Adrenal gland (tissue), 19 donors: ENCODE measurements at regions of chr22 and their contacts with region 1.

Region 1: GRCh38 chr22:34414484-34415440 is 494.5 kb upstream of the LARGE1 start:
- DNase-seq: peak in 6 of 7 donors; percentile 27 to 51 (median 32)
- H3K4me3 ChIP-seq: no peak overlapping the region
- H3K27ac ChIP-seq: no peak overlapping the region
- H3K4me1 ChIP-seq: no peaks in the 10 kb centered on the region
- H3K27me3 ChIP-seq: no peaks in the 10 kb centered on the region
- CTCF ChIP-seq: peak; percentile 20 to 56 (median 36)
- POLR2A ChIP-seq: no peak

Region 2: DNA sequence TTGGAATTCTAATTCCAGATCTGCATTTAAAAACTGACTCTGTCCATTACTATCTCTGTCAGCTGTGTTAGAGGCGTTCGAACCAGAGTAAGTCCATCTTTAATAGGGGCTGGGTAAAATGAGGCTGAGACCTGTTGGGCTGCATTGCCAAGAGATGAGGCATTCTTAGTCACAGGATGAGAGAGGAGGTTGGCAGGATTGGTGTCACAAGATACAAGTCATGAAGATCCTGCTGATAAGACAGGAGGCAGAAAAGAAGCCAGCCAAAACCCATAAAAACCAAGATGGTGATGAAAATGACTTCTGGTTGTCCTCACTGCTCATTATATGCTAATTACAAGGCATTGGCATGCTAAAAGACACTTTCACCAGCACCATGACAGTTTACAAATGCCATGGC is 294.9 kb after region 1 on chr22:
- intact Hi-C with region 1: no loop called
- DNase-seq: no peak
- H3K4me3 ChIP-seq: no peak overlapping the region
- H3K27ac ChIP-seq: no peak overlapping the region
- H3K4me1 ChIP-seq: no peaks in the 10 kb centered on the region
- H3K27me3 ChIP-seq: no peaks in the 10 kb centered on the region
- CTCF ChIP-seq: no peak
- POLR2A ChIP-seq: no peak

Region 3: GRCh38 chr22:35023692-35024363 is 609.1 kb after region 1 on chr22:
- intact Hi-C with region 1: loop called in 1 of 2 experiments (anchors 10 kb)
- DNase-seq: peak; percentile 37 to 72 (median 61)
- H3K4me3 ChIP-seq: no peak overlapping the region
- H3K27ac ChIP-seq: no peak overlapping the region
- H3K4me1 ChIP-seq: no peaks in the 10 kb centered on the region
- H3K27me3 ChIP-seq: peaks cover 12% of the 10 kb centered on the region
- CTCF ChIP-seq: peak; percentile 37 to 83 (median 70)
- POLR2A ChIP-seq: no peak